Lower leg skin (tissue), 4 donors: ENCODE measurements at regions of chrX and their contacts with region 1.

Region 1: GRCh38 chrX:129726307-129727111 is 12.3 kb upstream of the XPNPEP2 start:
- DNase-seq: peak; percentile 37 to 87
- H3K4me3 ChIP-seq: no peak overlapping the region
- CTCF ChIP-seq: peak in 1 of 3 donors; percentile 64
- POLR2A ChIP-seq: no peak

Region 2: DNA sequence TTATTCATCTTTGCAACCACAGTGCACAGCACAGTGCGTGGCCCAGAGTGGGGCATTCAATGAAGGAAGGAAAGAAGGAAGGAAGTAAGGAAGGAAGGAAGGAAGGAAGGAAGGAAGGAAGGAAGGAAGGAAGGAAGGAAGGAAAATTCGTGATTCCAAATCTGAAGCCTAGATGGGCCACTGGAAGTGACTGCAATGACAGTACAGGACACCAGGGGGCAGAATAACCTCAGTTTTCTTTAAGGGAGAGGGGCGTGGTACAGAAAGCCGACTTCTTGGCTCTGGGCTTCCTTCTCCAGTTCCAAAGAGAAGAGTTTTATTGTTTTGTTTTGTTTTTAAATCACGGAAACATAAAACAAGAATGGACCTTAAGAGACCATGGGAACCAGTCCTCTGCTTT is 119.6 kb before region 1 on chrX:
- intact Hi-C with region 1: loop called (anchors 10 kb)
- DNase-seq: peak; percentile 47 to 89
- H3K4me3 ChIP-seq: no peak overlapping the region
- CTCF ChIP-seq: peak in 1 of 3 donors; percentile 79
- POLR2A ChIP-seq: no peak

Region 3: GRCh38 chrX:129637217-129638109 is 89.0 kb before region 1 on chrX:
- intact Hi-C with region 1: loop called (anchors 10 kb)
- DNase-seq: peak; percentile 42 to 95
- H3K4me3 ChIP-seq: no peak overlapping the region
- CTCF ChIP-seq: peak in 1 of 3 donors; percentile 81
- POLR2A ChIP-seq: no peak